ENCODE measurements at regions of chr9 and their contacts with region 1.

Region 1: GRCh38 chr9:98101868-98102273 is 17.2 kb downstream of the TRIM14 start:
- DNase-seq: peak; percentile 99
- ATAC-seq: peak; percentile 90
- H3K4me3 ChIP-seq: peak overlapping the region; percentile 31; the same call in 1 of the 2 replicates
- H3K27ac ChIP-seq: peak overlapping the region; percentile 75
- H3K4me1 ChIP-seq: peaks cover 87% of the 10 kb centered on the region
- H3K27me3 ChIP-seq: no peaks in the 10 kb centered on the region
- CTCF ChIP-seq: no peak
- EP300 ChIP-seq: peak; percentile 80 to 82
- POLR2A ChIP-seq: peak; percentile 65
- RAD21 ChIP-seq: no peak

Region 2: GRCh38 chr9:98087420-98088354 is 14.2 kb before region 1 on chr9:
- CTCF ChIA-PET with region 1: no interaction called
- POLR2A ChIA-PET with region 1: no interaction called
- RAD21 ChIA-PET with region 1: interaction called, 6 read pairs
- SMC1A ChIA-PET with region 1: interaction called, 12 read pairs
- in situ Hi-C with region 1: no loop called
- intact Hi-C with region 1: no loop called
- DNase-seq: no peak
- ATAC-seq: no peak
- H3K4me3 ChIP-seq: no peak overlapping the region
- H3K27ac ChIP-seq: no peak overlapping the region
- H3K4me1 ChIP-seq: no peaks in the 10 kb centered on the region
- H3K27me3 ChIP-seq: no peaks in the 10 kb centered on the region
- CTCF ChIP-seq: no peak
- EP300 ChIP-seq: no peak
- POLR2A ChIP-seq: no peak
- RAD21 ChIP-seq: no peak